HEK293 (cell line): ENCODE measurements at regions of chr15 and their contacts with region 1.

Region 1: GRCh38 chr15:72231066-72231846 is at the start of gene PKM:
- H3K4me3 ChIP-seq: peak within 1 kb of the TSS; percentile 70
- H3K27ac ChIP-seq: peak within 1 kb of the TSS; percentile 98
- H3K4me1 ChIP-seq: peaks cover 19% of the 10 kb centered on the region
- CTCF ChIP-seq: peak; percentile 19

Region 2: GRCh38 chr15:72199711-72200212 is 31.5 kb before region 1 on chr15:
- CTCF ChIA-PET with region 1: interaction called, 35 read pairs
- POLR2A ChIA-PET with region 1: interaction called, 22 read pairs
- H3K4me3 ChIP-seq: no peak overlapping the region
- H3K27ac ChIP-seq: peak overlapping the region; percentile 39; the same call in 1 of the 2 replicates
- H3K4me1 ChIP-seq: no peaks in the 10 kb centered on the region; the same call in 1 of the 2 replicates
- CTCF ChIP-seq: peak; percentile 98

Region 3: DNA sequence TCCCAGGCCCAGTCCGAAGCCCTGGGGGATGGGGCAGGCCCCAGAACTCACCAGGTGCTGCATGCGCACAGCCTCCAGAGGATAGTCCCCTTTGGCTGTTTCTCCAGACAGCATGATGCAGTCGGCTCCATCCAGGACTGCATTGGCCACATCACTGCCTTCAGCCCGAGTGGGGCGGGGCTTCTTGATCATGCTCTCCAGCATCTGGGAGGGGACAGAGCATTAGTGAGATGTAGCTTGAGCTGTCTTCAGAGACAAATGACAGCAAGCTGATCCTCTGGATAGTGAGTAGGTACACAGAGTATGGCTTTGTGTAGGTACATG is 24.6 kb before region 1 on chr15:
- CTCF ChIA-PET with region 1: interaction called, 19 read pairs
- POLR2A ChIA-PET with region 1: interaction called, 22 read pairs
- H3K4me3 ChIP-seq: no peak overlapping the region
- H3K27ac ChIP-seq: no peak overlapping the region
- H3K4me1 ChIP-seq: no peaks in the 10 kb centered on the region
- CTCF ChIP-seq: no peak

Region 4: DNA sequence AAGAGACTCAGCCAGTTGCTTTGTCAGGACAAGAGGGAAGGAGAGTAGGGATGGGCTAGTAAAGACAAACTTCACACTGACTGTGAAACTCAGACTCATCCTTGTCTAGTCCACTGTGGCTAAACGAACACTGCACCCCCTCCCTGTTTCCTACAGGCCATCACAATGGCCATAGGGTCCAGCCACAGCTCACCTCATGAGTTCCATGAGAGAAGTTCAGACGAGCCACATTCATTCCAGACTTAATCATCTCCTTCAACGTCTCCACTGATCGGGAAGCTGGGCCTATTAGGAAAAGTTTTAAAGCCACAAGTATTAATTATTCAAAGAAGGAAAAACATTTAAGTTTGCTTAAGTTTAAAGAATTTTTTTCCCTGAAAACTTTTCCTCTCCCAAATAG is 14.0 kb before region 1 on chr15:
- CTCF ChIA-PET with region 1: interaction called, 29 read pairs
- POLR2A ChIA-PET with region 1: interaction called, 34 read pairs
- H3K4me3 ChIP-seq: no peak overlapping the region
- H3K27ac ChIP-seq: peak overlapping the region; percentile 46; the same call in 1 of the 2 replicates
- H3K4me1 ChIP-seq: no peaks in the 10 kb centered on the region
- CTCF ChIP-seq: no peak

Region 5: DNA sequence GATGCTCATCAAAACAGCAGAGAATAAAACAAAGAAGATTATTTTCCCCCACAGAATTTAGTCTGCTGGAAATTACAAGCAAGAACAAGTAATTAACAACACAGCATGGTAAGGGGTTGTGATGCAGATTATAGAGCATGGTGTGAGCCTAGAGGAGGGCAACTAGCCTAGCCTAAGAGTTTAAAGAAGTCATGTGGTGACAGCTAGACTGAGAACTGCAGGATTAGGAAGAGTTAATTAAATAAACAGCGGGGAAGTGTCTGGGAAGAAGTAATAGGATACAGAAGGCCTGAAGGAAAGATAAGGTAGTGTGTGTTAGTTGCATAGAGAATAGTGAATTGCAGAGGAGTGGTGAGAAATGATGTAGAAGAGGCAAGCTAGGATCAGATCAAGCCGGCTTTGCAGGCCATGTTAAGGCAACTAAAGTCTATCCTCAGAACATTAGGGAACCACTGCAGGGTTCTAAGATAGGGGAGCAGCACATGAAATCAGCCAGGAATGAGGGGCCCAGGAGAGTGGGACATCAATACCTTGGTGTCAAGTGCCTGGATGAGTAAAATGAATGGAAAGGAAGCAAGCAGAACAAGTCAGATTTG is 11.6 kb after region 1 on chr15:
- CTCF ChIA-PET with region 1: interaction called, 13 read pairs
- POLR2A ChIA-PET with region 1: interaction called, 66 read pairs
- H3K4me3 ChIP-seq: no peak overlapping the region
- H3K27ac ChIP-seq: no peak overlapping the region; the same call in 1 of the 2 replicates
- H3K4me1 ChIP-seq: peaks cover 6% of the 10 kb centered on the region; the same call in 1 of the 2 replicates
- CTCF ChIP-seq: no peak

Region 6: DNA sequence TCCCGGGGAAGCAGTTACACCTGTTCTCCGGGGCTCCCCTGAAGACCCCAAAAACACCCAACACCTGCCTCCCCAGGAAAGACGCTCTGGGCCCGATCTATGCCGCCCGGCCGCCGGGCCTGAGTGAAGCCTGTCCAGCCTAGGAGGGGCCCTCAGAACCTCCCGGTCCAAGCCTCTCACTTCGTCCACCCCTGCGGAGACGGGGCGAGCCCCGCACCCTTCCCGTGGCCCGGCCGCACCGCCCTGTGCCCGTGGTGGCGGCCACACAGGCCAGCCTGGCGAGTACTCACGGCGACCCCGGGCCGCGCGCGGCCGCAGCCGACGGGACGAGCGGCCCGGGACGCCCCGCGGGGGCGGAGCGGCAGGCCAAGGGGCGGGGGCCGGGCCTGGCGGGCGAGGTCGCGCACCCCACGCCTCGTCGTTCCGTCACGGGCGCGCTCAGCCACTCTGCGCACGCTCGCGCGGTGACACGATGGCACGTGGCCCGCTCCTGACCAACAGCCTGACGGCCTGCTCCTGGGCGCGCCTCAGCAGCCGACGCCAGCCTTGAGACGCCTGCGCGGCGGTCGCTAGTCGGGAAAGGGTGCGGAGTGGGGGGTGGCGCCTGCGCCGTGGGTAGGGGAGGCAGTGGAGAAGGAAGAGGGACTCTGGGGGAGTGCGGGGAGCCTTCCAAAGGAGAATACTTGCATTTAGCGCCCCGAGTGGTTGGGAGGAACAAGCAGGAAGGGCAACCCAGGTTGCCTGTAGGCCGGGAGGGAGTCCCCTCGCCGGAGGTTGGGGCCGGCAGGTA is 41.2 kb after region 1 on chr15 and contains the start of gene PARP6:
- CTCF ChIA-PET with region 1: interaction called, 9 read pairs
- POLR2A ChIA-PET with region 1: interaction called, 11 read pairs
- H3K4me3 ChIP-seq: peak within 1 kb of the TSS; percentile 82
- H3K27ac ChIP-seq: peak within 1 kb of the TSS; percentile 88
- H3K4me1 ChIP-seq: peaks cover 6% of the 10 kb centered on the region; the same call in 1 of the 2 replicates
- CTCF ChIP-seq: peak; percentile 99

Region 7: DNA sequence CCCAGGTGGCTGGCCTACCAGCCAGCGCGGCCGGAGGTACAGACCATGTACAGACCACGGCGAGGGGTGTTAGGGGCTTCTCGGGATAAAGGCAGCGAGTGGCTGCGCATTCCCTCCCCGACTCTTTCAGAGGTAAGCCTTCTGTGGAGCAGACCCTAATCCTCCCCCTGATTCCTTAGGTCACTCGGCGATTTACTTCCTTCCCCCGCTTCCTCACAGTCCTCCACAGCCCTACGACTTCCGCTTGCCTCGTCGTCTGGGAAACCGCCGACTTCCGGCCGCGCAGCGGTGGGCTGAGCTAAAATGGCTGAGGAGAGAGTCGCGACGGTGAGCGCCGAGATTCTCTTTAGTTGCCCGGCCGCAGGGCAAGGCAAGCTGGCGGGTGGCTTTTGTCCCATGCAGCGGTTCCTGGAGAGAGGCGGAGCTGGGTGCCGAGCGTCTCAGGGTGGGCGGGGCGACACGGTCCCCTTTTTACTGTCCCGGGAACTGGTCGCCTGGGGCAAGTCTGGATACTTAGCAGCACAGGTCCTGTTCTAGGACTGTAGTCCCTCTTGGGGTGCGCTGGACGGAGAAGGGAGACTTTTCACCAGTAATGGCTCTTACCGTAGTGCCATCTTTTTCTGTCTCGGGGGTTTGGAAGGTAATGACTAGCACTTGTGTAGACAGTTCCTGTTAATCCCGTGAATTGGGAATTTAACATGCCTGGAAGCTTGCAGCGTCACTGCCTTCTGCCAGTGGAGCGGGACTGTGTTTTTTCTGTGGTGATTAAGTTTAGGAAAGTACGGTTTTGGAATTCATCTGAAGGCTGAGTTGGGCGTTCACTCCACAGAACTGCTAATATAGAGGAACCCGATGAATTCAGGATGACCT is 454.9 kb after region 1 on chr15 and contains the starts of genes BBS4 and HIGD2B:
- CTCF ChIA-PET with region 1: interaction called, 3 read pairs
- POLR2A ChIA-PET with region 1: interaction called, 10 read pairs
- H3K4me3 ChIP-seq: peak within 1 kb of the TSS; percentile 91
- H3K27ac ChIP-seq: peak within 1 kb of the TSS; percentile 83
- H3K4me1 ChIP-seq: peaks cover 10% of the 10 kb centered on the region
- CTCF ChIP-seq: no peak; the same call in 1 of the 2 replicates